ENCODE measurements at regions of chr19 and their contacts with region 1.

Region 1: GRCh38 chr19:12400633-12401502 is at the start of gene ZNF799:
- H3K4me3 Mint-ChIP-seq: peak within 1 kb of the TSS; percentile 94
- H3K27ac Mint-ChIP-seq: peak within 1 kb of the TSS; percentile 94
- H3K4me1 Mint-ChIP-seq: peaks cover 11% of the 10 kb centered on the region
- H3K27me3 Mint-ChIP-seq: peaks cover 2% of the 10 kb centered on the region

Region 2: GRCh38 chr19:12333162-12334159 is 67.4 kb before region 1 on chr19 and contains the start of gene ZNF563:
- intact Hi-C with region 1: loop called (anchors 2 kb)
- H3K4me3 Mint-ChIP-seq: peak within 1 kb of the TSS; percentile 98
- H3K27ac Mint-ChIP-seq: peak within 1 kb of the TSS; percentile 96
- H3K4me1 Mint-ChIP-seq: peaks cover 26% of the 10 kb centered on the region
- H3K27me3 Mint-ChIP-seq: no peaks in the 10 kb centered on the region

Region 3: GRCh38 chr19:12365236-12366162 is 35.4 kb before region 1 on chr19 and contains the start of gene ZNF442:
- intact Hi-C with region 1: loop called (anchors 2 kb)
- H3K4me3 Mint-ChIP-seq: peak within 1 kb of the TSS; percentile 96
- H3K27ac Mint-ChIP-seq: peak within 1 kb of the TSS; percentile 91
- H3K4me1 Mint-ChIP-seq: peaks cover 32% of the 10 kb centered on the region
- H3K27me3 Mint-ChIP-seq: peaks cover 14% of the 10 kb centered on the region